ENCODE measurements at regions of chr7 and their contacts with region 1.

Region 1: GRCh38 chr7:119270045-119270464 is 1002.9 kb upstream of the KCND2 start:
- DNase-seq: no peak
- ATAC-seq: peak; percentile 71
- H3K4me3 Mint-ChIP-seq: no peak overlapping the region
- H3K27ac Mint-ChIP-seq: no peak overlapping the region
- H3K4me1 Mint-ChIP-seq: no peaks in the 10 kb centered on the region
- H3K27me3 Mint-ChIP-seq: no peaks in the 10 kb centered on the region
- CTCF ChIP-seq: peak; percentile 68

Region 2: DNA sequence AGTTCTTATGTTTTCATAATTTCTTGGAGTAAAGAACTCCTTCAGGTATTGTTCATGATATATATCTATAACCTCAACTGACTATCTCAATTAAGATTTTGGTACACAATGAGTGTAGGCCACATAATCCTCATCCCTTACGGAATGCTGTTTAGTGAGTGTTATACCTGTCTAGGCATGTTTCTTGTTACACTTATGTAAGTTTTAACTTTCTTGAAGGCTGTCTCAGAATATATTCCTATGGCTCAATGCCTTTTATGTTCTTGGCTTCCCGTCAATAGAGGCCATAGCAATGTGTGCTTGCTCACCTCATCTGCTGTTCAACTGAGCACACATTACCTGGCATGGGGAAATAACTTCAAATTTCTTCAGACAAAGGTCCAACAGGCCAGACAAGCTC is 1581.9 kb before region 1 on chr7:
- CTCF ChIA-PET with region 1: no interaction called
- POLR2A ChIA-PET with region 1: no interaction called
- intact Hi-C with region 1: no loop called
- DNase-seq: no peak
- ATAC-seq: no peak
- H3K4me3 Mint-ChIP-seq: no peak overlapping the region
- H3K27ac Mint-ChIP-seq: no peak overlapping the region
- H3K4me1 Mint-ChIP-seq: no peaks in the 10 kb centered on the region
- H3K27me3 Mint-ChIP-seq: no peaks in the 10 kb centered on the region
- CTCF ChIP-seq: no peak

Region 3: DNA sequence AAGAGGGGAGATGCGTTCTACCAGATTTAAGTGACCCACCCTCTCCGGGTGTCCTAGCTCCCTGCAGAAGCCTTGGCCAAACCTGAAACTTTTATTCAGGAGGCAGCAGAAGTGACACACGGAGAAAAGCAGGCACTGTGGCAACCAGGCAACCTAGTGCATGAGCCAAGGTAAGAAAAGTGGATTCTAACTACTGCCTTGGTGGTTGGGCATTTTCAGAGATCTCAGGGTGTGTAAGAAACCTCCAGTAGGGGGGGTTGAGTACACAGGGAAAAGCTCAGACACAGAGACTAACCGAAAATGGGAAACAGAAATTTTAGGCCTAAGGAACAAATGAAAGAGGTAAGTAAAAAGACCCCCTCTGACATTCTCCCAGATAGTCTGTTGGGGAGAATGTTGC is 399.9 kb before region 1 on chr7:
- CTCF ChIA-PET with region 1: no interaction called
- POLR2A ChIA-PET with region 1: no interaction called
- intact Hi-C with region 1: no loop called
- DNase-seq: no peak
- ATAC-seq: no peak
- H3K4me3 Mint-ChIP-seq: no peak overlapping the region
- H3K27ac Mint-ChIP-seq: no peak overlapping the region
- H3K4me1 Mint-ChIP-seq: no peaks in the 10 kb centered on the region
- H3K27me3 Mint-ChIP-seq: no peaks in the 10 kb centered on the region
- CTCF ChIP-seq: no peak

Region 4: GRCh38 chr7:119254742-119255141 is 15.3 kb before region 1 on chr7:
- CTCF ChIA-PET with region 1: no interaction called
- POLR2A ChIA-PET with region 1: no interaction called
- intact Hi-C with region 1: no loop called
- DNase-seq: no peak
- ATAC-seq: no peak
- H3K4me3 Mint-ChIP-seq: no peak overlapping the region
- H3K27ac Mint-ChIP-seq: no peak overlapping the region
- H3K4me1 Mint-ChIP-seq: no peaks in the 10 kb centered on the region
- H3K27me3 Mint-ChIP-seq: no peaks in the 10 kb centered on the region
- CTCF ChIP-seq: no peak

Region 5: DNA sequence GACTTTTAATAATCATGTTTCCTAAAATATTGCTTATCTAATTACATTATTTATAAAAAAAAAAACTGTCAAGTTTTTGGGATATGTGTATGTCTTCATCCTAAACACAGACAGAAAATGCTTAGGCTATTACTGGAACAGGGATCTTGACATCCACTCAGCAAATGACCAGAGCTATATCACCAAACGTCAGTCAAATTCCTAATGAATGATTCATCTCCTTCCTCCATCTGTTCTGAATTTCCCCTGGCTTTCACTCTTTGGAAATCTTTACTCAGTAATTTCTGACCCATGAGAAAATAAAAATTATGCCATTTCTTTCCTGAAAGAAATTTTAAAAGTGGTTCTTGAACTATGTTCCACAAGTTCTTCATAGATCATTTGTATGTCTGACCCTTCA is 450.5 kb after region 1 on chr7:
- CTCF ChIA-PET with region 1: no interaction called
- POLR2A ChIA-PET with region 1: no interaction called
- intact Hi-C with region 1: no loop called
- DNase-seq: no peak
- ATAC-seq: no peak
- H3K4me3 Mint-ChIP-seq: no peak overlapping the region
- H3K27ac Mint-ChIP-seq: no peak overlapping the region
- H3K4me1 Mint-ChIP-seq: no peaks in the 10 kb centered on the region
- H3K27me3 Mint-ChIP-seq: no peaks in the 10 kb centered on the region
- CTCF ChIP-seq: no peak

Region 6: GRCh38 chr7:120272261-120272660 is 1002.2 kb after region 1 on chr7:
- CTCF ChIA-PET with region 1: no interaction called
- POLR2A ChIA-PET with region 1: no interaction called
- intact Hi-C with region 1: loop called (anchors 5 kb)
- DNase-seq: no peak
- ATAC-seq: no peak
- H3K4me3 Mint-ChIP-seq: no peak overlapping the region
- H3K27ac Mint-ChIP-seq: no peak overlapping the region
- H3K4me1 Mint-ChIP-seq: peaks cover 12% of the 10 kb centered on the region
- H3K27me3 Mint-ChIP-seq: peaks cover 30% of the 10 kb centered on the region
- CTCF ChIP-seq: no peak

Measured in activated B cell treated with CpG ODN at 0.5 μM for 24 hours (primary cell).